BJ (cell line): ENCODE measurements at regions of chr14 and their contacts with region 1.

Region 1: GRCh38 chr14:95452176-95452892 is 64.1 kb downstream of the SYNE3 start:
- DNase-seq: no peak
- H3K4me3 ChIP-seq: no peak overlapping the region
- H3K27me3 ChIP-seq: no peaks in the 10 kb centered on the region
- CTCF ChIP-seq: peak; percentile 55

Region 2: DNA sequence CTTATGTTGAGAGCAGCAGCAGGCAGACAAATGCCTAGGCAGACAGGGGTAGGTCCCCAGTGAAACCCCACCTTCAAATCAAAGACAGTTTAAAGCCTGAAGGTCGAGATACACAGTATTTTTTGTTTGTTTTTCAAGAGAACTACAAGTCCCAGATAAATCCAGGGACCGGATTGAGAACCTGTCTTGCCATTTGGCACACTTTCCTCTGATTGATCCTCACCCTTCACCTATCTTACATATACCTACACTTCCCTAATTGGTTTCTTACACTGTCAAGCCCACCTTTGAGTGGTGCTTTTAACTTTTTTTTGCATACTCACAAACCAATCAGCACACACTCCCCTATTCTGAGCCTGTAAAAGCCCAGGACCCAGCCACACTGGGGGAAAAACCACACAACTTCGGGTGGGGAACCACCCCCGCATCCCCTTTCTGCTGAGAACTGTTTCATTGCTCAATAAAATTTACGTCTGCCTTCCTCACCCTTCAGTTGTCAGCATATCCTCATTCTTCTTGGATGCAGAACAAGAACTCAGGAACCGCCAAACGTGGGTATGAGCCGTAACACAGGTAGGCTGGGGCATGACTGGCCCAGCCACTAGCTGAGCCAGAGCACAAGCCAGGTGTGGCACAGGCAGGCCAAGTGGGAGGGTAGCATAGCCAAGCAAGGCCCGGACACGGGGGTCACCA is 306.1 kb before region 1 on chr14:
- CTCF ChIA-PET with region 1: no interaction called
- POLR2A ChIA-PET with region 1: no interaction called
- DNase-seq: no peak
- H3K4me3 ChIP-seq: no peak overlapping the region
- H3K27me3 ChIP-seq: no peaks in the 10 kb centered on the region
- CTCF ChIP-seq: no peak

Region 3: DNA sequence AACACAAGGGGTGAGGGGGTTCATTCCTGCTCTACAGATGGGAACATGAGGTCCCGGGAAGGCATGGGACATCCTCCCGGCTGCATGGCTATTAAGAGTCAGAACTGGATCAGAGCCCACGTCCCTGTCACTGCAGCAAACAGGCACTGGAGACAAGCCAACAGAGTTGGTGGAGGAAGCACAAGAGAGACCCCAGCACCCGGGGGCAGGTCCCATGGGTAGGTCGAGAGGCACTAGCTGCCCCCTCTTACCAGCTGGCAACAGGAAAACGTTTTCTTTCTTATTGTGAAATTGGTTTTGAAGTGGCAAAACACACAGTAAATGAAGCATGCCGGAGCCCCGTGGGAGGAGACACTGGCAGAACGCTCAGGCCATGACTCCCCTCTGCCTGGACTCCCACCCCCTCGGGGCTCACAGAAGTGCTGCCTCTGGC is 20.5 kb after region 1 on chr14:
- CTCF ChIA-PET with region 1: interaction called, 11 read pairs
- POLR2A ChIA-PET with region 1: no interaction called
- DNase-seq: no peak
- H3K4me3 ChIP-seq: no peak overlapping the region
- H3K27me3 ChIP-seq: no peaks in the 10 kb centered on the region
- CTCF ChIP-seq: no peak

Region 4: GRCh38 chr14:95480109-95480886 is 28.0 kb after region 1 on chr14:
- CTCF ChIA-PET with region 1: interaction called, 7 read pairs
- POLR2A ChIA-PET with region 1: interaction called, 12 read pairs
- DNase-seq: no peak
- H3K4me3 ChIP-seq: no peak overlapping the region
- H3K27me3 ChIP-seq: no peaks in the 10 kb centered on the region
- CTCF ChIP-seq: no peak